Activated CD8-positive, alpha-beta T cell treated with anti-CD3 and anti-CD28 coated beads for 36 hours (primary cell): ENCODE measurements at regions of chr1 and their contacts with region 1.

Region 1: DNA sequence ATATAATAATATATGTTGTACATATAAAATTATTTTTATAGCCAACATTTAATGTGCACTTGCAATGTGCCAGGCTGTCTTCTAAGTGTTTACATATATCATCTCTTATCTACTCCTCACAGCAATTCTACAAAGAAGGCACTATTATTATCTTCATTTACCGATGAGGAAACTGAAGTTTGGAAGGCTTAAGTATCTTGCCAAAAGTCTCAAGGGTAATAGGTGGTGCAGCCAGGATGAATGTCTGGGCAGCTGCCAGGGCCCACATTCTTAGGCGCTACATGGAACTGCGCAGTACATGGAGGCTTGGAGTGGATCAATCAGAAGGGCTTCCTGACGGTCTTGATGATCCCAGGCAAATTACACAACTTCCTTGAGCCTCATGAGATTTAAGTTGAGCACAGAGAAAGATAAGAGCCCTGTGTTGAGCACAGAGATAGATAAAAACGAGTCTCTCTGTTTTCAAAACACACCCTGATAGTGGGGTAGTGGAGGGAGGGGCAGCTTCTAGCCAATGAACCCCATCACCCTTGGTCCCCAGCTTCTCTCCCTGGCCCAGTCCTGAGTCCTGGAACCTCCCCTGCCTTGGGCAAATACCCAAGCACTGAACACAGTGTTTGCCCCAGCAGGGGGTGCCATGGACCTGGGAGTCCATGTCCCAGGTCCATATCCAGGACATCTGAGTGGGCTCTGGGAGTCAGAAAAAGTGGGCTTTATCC is 9.2 kb downstream of the POU3F1 start:
- DNase-seq: no peak
- ATAC-seq: no peak
- H3K4me3 Mint-ChIP-seq: no peak overlapping the region
- H3K27ac Mint-ChIP-seq: no peak overlapping the region
- H3K4me1 Mint-ChIP-seq: no peaks in the 10 kb centered on the region
- H3K27me3 Mint-ChIP-seq: peaks cover 24% of the 10 kb centered on the region
- CTCF ChIP-seq: no peak

Region 2: GRCh38 chr1:38026592-38027200 is 10.7 kb before region 1 on chr1:
- CTCF ChIA-PET with region 1: interaction called, 5 read pairs
- POLR2A ChIA-PET with region 1: interaction called, 53 read pairs
- intact Hi-C with region 1: no loop called
- DNase-seq: peak; percentile 76
- ATAC-seq: no peak
- H3K4me3 Mint-ChIP-seq: no peak overlapping the region
- H3K27ac Mint-ChIP-seq: no peak overlapping the region
- H3K4me1 Mint-ChIP-seq: peaks cover 55% of the 10 kb centered on the region
- H3K27me3 Mint-ChIP-seq: no peaks in the 10 kb centered on the region
- CTCF ChIP-seq: peak; percentile 71